ENCODE measurements at regions of chr13 and their contacts with region 1.

Region 1: GRCh38 chr13:41458761-41459431 is 1.5 kb downstream of the RGCC start:
- DNase-seq: peak; percentile 78
- H3K4me3 Mint-ChIP-seq: peak overlapping the region; percentile 76
- H3K27ac Mint-ChIP-seq: peak overlapping the region; percentile 84
- H3K4me1 Mint-ChIP-seq: peaks cover 58% of the 10 kb centered on the region
- H3K27me3 Mint-ChIP-seq: peaks cover 25% of the 10 kb centered on the region

Region 2: GRCh38 chr13:41492404-41493260 is 33.7 kb after region 1 on chr13:
- CTCF ChIA-PET with region 1: interaction called, 15 read pairs
- POLR2A ChIA-PET with region 1: no interaction called
- DNase-seq: peak; percentile 44
- H3K4me3 Mint-ChIP-seq: peak overlapping the region; percentile 15
- H3K27ac Mint-ChIP-seq: peak overlapping the region; percentile 97
- H3K4me1 Mint-ChIP-seq: peaks cover 85% of the 10 kb centered on the region
- H3K27me3 Mint-ChIP-seq: no peaks in the 10 kb centered on the region